ENCODE measurements at regions of chr3 and their contacts with region 1.

Region 1: DNA sequence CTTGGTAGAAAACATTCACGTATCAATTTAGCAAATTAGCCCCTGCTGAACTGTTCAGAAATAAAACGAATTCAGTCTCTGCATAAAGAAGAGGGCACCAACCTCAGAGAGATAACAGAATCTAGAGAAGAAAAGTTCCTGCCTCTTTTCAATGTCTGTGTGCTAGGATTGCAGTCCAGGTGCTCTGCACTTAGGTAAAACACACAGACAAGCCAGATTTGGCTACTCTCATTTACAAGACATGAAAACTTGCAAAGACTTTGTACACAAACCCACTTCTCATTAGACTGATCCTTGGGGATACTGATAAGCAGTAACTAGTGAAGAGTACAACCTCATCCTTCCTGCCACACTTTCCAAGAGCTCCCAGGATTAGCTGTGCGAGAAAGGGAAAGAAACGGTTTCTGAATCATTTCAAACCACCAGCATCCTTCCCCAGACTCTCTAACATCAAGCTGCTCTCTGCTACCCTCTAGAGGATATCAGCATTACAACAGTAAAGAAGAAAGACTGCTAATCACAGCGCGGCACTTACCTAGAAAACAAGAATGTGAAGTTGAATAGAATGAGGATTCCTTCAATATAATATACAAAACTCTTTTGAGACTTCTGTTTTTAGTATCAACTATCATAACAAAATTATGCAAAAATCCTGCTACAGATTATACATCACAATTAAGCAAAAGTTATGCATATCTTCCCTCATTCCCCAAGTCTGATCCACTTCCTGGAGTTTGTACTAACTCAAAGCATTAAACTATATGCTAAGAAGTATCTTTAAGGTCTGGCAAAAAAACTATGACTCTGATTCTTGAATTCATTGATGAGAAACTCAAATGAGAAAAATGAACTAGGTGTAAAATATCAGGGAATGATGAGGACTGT is 306.4 kb downstream of the MAGI1 start:
- DNase-seq: peak; percentile 22
- H3K4me3 ChIP-seq: no peak overlapping the region
- H3K27me3 ChIP-seq: no peaks in the 10 kb centered on the region
- CTCF ChIP-seq: peak; percentile 84

Region 2: GRCh38 chr3:65130782-65131181 is 601.5 kb before region 1 on chr3:
- CTCF ChIA-PET with region 1: no interaction called
- POLR2A ChIA-PET with region 1: no interaction called
- DNase-seq: no peak
- H3K4me3 ChIP-seq: no peak overlapping the region
- H3K27me3 ChIP-seq: no peaks in the 10 kb centered on the region
- CTCF ChIP-seq: no peak

Region 3: GRCh38 chr3:65439641-65440284 is 292.5 kb before region 1 on chr3:
- CTCF ChIA-PET with region 1: interaction called, 14 read pairs
- POLR2A ChIA-PET with region 1: no interaction called
- DNase-seq: no peak
- H3K4me3 ChIP-seq: no peak overlapping the region
- H3K27me3 ChIP-seq: no peaks in the 10 kb centered on the region
- CTCF ChIP-seq: peak; percentile 74

Region 4: GRCh38 chr3:65751123-65751700 is 18.9 kb after region 1 on chr3:
- CTCF ChIA-PET with region 1: interaction called, 18 read pairs
- POLR2A ChIA-PET with region 1: no interaction called
- DNase-seq: no peak
- H3K4me3 ChIP-seq: no peak overlapping the region
- H3K27me3 ChIP-seq: no peaks in the 10 kb centered on the region
- CTCF ChIP-seq: peak; percentile 75

Region 5: GRCh38 chr3:65861718-65862117 is 129.4 kb after region 1 on chr3:
- CTCF ChIA-PET with region 1: no interaction called
- POLR2A ChIA-PET with region 1: no interaction called
- DNase-seq: no peak
- H3K4me3 ChIP-seq: no peak overlapping the region
- H3K27me3 ChIP-seq: no peaks in the 10 kb centered on the region
- CTCF ChIP-seq: no peak

Measured in BJ (cell line).